CD4-positive, alpha-beta memory T cell (primary cell): ENCODE measurements at regions of chr6 and their contacts with region 1.

Region 1: GRCh38 chr6:16183187-16183664 is 54.3 kb downstream of the MYLIP start:
- DNase-seq: peak in 3 of 5 donors; percentile 44 to 49 (median 48)
- H3K4me3 ChIP-seq: no peak overlapping the region
- H3K4me3 Mint-ChIP-seq: peak overlapping the region in 3 of 8 donors; percentile 15 to 47 (median 35)
- H3K27ac ChIP-seq: no peak overlapping the region
- H3K27ac Mint-ChIP-seq: peak overlapping the region in 5 of 7 donors; percentile 23 to 71 (median 41)
- H3K4me1 ChIP-seq: peaks cover 24% of the 10 kb centered on the region
- H3K4me1 Mint-ChIP-seq: peaks cover 22 to 44% (median 33%) of the 10 kb centered on the region in 4 donors
- H3K27me3 ChIP-seq: no peaks in the 10 kb centered on the region
- H3K27me3 Mint-ChIP-seq: peaks cover 0 to 1% of the 10 kb centered on the region in 2 donors

Region 2: GRCh38 chr6:15685619-15686018 is 497.6 kb before region 1 on chr6:
- CTCF ChIA-PET with region 1: interaction called, 13 read pairs
- POLR2A ChIA-PET with region 1: interaction called, 3 read pairs
- intact Hi-C with region 1: no loop called
- DNase-seq: no peak
- H3K4me3 ChIP-seq: no peak overlapping the region
- H3K4me3 Mint-ChIP-seq: no peak overlapping the region
- H3K27ac ChIP-seq: no peak overlapping the region
- H3K27ac Mint-ChIP-seq: no peak overlapping the region
- H3K4me1 ChIP-seq: no peaks in the 10 kb centered on the region
- H3K4me1 Mint-ChIP-seq: no peaks in the 10 kb centered on the region
- H3K27me3 ChIP-seq: peaks cover 3% of the 10 kb centered on the region
- H3K27me3 Mint-ChIP-seq: peaks cover 3 to 12% of the 10 kb centered on the region in 2 donors

Region 3: DNA sequence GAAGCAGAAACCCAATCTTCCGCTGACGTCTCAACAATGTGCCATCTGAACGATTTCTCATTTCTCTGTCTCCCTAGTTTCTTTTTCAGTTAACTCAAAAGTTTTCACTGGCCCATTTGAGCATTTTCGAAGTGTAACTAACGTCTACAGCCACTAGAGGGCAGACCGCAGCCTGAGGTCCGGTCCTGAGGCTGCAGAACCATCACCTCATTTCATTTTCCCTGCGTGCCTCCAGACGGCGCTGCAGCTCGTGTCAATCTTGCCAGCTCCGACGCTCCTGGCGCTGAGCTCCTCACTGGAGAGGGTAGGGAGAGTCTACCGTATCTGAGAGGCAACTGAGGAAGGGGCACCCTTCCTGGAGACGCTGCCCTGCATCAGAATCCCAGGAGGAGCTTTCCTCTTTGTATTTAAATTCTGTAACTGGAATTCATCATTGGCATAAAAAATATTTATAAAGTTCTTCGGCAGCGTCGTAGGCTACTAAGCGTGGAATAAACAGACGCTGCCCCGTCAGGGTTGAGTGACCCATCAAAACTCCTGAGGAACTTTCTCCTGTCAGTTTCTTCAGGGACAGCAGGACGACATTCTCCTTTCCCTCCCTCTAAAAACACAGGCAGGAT is 491.9 kb before region 1 on chr6:
- CTCF ChIA-PET with region 1: interaction called, 158 read pairs
- POLR2A ChIA-PET with region 1: interaction called, 7 read pairs
- intact Hi-C with region 1: loop called (anchors 1 kb)
- DNase-seq: peak; percentile 75 to 80 (median 77)
- H3K4me3 ChIP-seq: no peak overlapping the region
- H3K4me3 Mint-ChIP-seq: peak overlapping the region in 1 of 8 donors; percentile 11
- H3K27ac ChIP-seq: no peak overlapping the region
- H3K27ac Mint-ChIP-seq: peak overlapping the region in 4 of 7 donors; percentile 4 to 36 (median 20)
- H3K4me1 ChIP-seq: no peaks in the 10 kb centered on the region
- H3K4me1 Mint-ChIP-seq: peaks cover 4 to 8% (median 5%) of the 10 kb centered on the region in 4 donors
- H3K27me3 ChIP-seq: no peaks in the 10 kb centered on the region
- H3K27me3 Mint-ChIP-seq: peaks cover 7% of the 10 kb centered on the region in 2 donors

Region 4: GRCh38 chr6:16128759-16129622 is 54.2 kb before region 1 on chr6 and contains the start of gene MYLIP:
- CTCF ChIA-PET with region 1: interaction called, 33 read pairs
- POLR2A ChIA-PET with region 1: interaction called, 82 read pairs
- intact Hi-C with region 1: loop called (anchors 1 kb)
- DNase-seq: peak; percentile 96 to 97 (median 97)
- H3K4me3 ChIP-seq: peak within 1 kb of the TSS; percentile 66 to 89
- H3K4me3 Mint-ChIP-seq: peak within 1 kb of the TSS; percentile 95 to 99 (median 98)
- H3K27ac ChIP-seq: peak within 1 kb of the TSS; percentile 93
- H3K27ac Mint-ChIP-seq: peak within 1 kb of the TSS; percentile 96 to 98 (median 97)
- H3K4me1 ChIP-seq: peaks cover 38% of the 10 kb centered on the region
- H3K4me1 Mint-ChIP-seq: peaks cover 18 to 54% (median 31%) of the 10 kb centered on the region in 4 donors
- H3K27me3 ChIP-seq: no peaks in the 10 kb centered on the region
- H3K27me3 Mint-ChIP-seq: peaks cover 3% of the 10 kb centered on the region in 2 donors
- total RNA-seq, gene MYLIP: 17.5 to 19.9 TPM

Region 5: GRCh38 chr6:16136621-16137450 is 46.4 kb before region 1 on chr6:
- CTCF ChIA-PET with region 1: interaction called, 20 read pairs
- POLR2A ChIA-PET with region 1: interaction called, 82 read pairs
- intact Hi-C with region 1: no loop called
- DNase-seq: peak; percentile 41 to 86 (median 52)
- H3K4me3 ChIP-seq: no peak overlapping the region
- H3K4me3 Mint-ChIP-seq: peak overlapping the region; percentile 68 to 86 (median 78)
- H3K27ac ChIP-seq: peak overlapping the region; percentile 40
- H3K27ac Mint-ChIP-seq: peak overlapping the region; percentile 76 to 90 (median 86)
- H3K4me1 ChIP-seq: peaks cover 88% of the 10 kb centered on the region
- H3K4me1 Mint-ChIP-seq: peaks cover 75 to 99% (median 86%) of the 10 kb centered on the region in 4 donors
- H3K27me3 ChIP-seq: no peaks in the 10 kb centered on the region
- H3K27me3 Mint-ChIP-seq: no peaks in the 10 kb centered on the region

Region 6: GRCh38 chr6:16168858-16169257 is 14.4 kb before region 1 on chr6:
- CTCF ChIA-PET with region 1: interaction called, 14 read pairs
- POLR2A ChIA-PET with region 1: interaction called, 3 read pairs
- intact Hi-C with region 1: no loop called
- DNase-seq: peak in 1 of 5 donors; percentile 25
- H3K4me3 ChIP-seq: no peak overlapping the region
- H3K4me3 Mint-ChIP-seq: peak overlapping the region in 2 of 8 donors; percentile 32 to 46
- H3K27ac ChIP-seq: no peak overlapping the region
- H3K27ac Mint-ChIP-seq: peak overlapping the region in 3 of 7 donors; percentile 30 to 81 (median 36)
- H3K4me1 ChIP-seq: peaks cover 10% of the 10 kb centered on the region
- H3K4me1 Mint-ChIP-seq: peaks cover 9 to 14% (median 13%) of the 10 kb centered on the region in 4 donors
- H3K27me3 ChIP-seq: peaks cover 4% of the 10 kb centered on the region
- H3K27me3 Mint-ChIP-seq: peaks cover 4 to 15% of the 10 kb centered on the region in 2 donors

Region 7: GRCh38 chr6:16206595-16207037 is 23.4 kb after region 1 on chr6:
- CTCF ChIA-PET with region 1: interaction called, 28 read pairs
- POLR2A ChIA-PET with region 1: no interaction called
- intact Hi-C with region 1: loop called (anchors 1 kb)
- DNase-seq: peak; percentile 49 to 58 (median 55)
- H3K4me3 ChIP-seq: no peak overlapping the region
- H3K4me3 Mint-ChIP-seq: no peak overlapping the region
- H3K27ac ChIP-seq: no peak overlapping the region
- H3K27ac Mint-ChIP-seq: no peak overlapping the region
- H3K4me1 ChIP-seq: no peaks in the 10 kb centered on the region
- H3K4me1 Mint-ChIP-seq: peaks cover 0 to 4% (median 2%) of the 10 kb centered on the region in 4 donors
- H3K27me3 ChIP-seq: no peaks in the 10 kb centered on the region
- H3K27me3 Mint-ChIP-seq: peaks cover 6 to 23% of the 10 kb centered on the region in 2 donors